Cardiac septum (tissue), 1 donor: ENCODE measurements at regions of chr5 and their contacts with region 1.

Region 1: DNA sequence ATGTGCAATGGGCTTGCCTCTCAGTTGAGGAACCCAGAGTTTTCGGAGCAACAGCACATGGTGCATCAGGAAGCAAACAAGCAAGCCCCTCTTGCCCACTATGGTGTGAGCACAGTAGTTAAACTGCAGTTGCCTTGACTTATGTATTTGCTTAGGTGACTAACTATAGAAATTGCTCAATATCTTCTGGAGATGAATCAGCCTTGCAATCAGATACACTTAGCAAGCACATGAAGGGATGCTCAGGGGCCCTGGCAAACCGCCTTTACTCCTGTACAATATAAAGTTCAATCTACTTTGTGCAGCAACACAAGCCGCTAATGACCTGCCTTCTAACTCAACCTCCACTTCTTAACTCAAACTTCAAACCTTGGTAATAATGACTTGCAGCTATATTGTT is 581.7 kb upstream of the RIOK2 start:
- DNase-seq: no peak

Region 2: DNA sequence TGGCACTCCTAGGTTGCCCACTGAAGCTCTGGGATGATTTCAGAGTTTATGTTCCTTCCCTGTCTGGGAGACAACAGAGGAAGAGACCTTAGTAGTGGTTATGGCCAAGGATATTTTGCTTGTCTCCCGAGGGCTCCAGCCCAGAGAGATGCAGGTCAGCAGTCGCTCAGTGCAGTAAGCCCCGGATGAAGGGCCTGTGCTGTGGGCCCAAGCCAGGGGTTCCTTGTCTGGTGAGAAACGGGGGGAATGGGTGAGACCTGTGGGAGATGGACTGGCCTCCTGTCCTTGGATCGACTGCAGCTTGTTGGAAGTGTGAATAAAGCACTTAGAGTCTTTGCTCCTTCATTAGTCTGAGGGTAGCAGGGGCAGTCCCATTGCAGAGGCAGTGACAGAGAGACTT is 321.0 kb before region 1 on chr5:
- intact Hi-C with region 1: no loop called
- DNase-seq: no peak

Region 3: DNA sequence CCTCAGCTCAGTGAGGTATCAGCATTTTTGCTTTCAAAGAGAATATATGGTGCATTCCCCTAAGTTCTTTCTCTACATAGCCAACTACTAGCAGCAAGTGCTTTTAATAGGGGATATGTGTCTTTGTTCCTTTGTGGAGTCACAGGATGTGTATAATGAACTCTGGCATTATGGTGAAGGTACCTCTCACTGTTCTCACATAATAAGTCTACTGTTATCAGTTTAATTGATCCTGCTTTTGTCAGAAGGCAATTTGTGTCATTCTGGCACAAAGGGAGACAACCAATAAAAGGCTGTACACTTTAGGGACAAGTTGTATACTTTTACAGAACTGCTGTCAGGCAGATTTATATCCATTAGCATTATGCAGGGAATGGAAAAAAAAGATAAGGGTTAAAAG is 50.3 kb before region 1 on chr5:
- intact Hi-C with region 1: loop called (anchors 1 kb)
- DNase-seq: no peak